ENCODE measurements at regions of chr11 and their contacts with region 1.

Region 1: DNA sequence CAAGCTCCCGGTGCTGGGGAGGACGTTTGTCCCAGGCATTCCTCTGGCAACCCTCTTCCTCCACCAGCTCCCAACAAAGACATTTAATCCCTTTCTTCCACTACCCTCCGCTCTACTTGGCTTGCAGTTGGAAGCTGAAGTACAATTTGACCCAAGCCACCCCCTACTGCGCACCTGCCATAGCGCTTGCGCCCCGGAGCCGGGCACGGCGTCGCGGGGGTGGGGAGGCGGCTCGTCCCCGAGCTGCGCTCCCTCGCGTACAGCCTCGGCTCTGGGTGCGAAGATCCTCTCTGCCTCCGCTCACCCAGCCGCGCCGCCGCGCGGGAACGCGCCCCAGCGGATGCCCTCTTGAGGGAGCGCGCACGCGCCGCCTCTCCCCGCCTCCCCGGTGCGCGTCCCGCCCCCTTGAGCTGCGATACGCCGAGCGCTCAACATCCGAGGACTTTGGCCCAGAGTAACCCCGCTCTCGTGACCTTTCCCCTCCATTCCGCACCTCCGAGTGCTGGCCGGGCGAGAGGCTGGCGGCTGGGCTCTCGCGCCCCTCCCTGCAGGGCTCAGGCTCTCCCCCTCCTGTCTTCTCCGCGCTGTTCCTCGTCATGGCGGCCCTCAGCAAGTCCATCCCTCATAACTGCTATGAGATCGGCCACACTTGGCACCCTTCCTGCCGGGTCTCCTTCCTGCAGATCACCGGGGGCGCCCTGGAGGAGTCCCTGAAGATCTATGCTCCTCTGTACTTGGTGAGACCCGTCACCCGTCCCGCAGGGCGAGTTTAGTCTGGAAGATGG is at the start of gene TMEM135:
- DNase-seq: peak; percentile 81 to 95 (median 90)
- ATAC-seq: peak; percentile 95
- H3K4me3 ChIP-seq: peak within 1 kb of the TSS; percentile 95
- H3K4me3 Mint-ChIP-seq: peak within 1 kb of the TSS; percentile 96
- H3K27ac ChIP-seq: peak within 1 kb of the TSS; percentile 39 to 73
- H3K27ac Mint-ChIP-seq: peak within 1 kb of the TSS; percentile 85
- H3K4me1 ChIP-seq: peaks cover 20% of the 10 kb centered on the region
- H3K4me1 Mint-ChIP-seq: peaks cover 57% of the 10 kb centered on the region
- H3K27me3 ChIP-seq: no peaks in the 10 kb centered on the region
- H3K27me3 Mint-ChIP-seq: no peaks in the 10 kb centered on the region
- CTCF ChIP-seq: no peak
- total RNA-seq, gene TMEM135: 14.1 to 15.6 TPM

Region 2: GRCh38 chr11:87081358-87081757 is 43.7 kb after region 1 on chr11:
- CTCF ChIA-PET with region 1: no interaction called
- POLR2A ChIA-PET with region 1: interaction called, 3 read pairs
- intact Hi-C with region 1: loop called in 1 of 2 experiments (anchors 10 kb)
- DNase-seq: peak in 3 of 14 experiments; percentile 26 to 50 (median 27)
- ATAC-seq: peak; percentile 49
- H3K4me3 ChIP-seq: peak overlapping the region; percentile 39
- H3K4me3 Mint-ChIP-seq: peak overlapping the region; percentile 89
- H3K27ac ChIP-seq: peak overlapping the region in 1 of 2 donors; percentile 2
- H3K27ac Mint-ChIP-seq: peak overlapping the region; percentile 81
- H3K4me1 ChIP-seq: no peaks in the 10 kb centered on the region
- H3K4me1 Mint-ChIP-seq: peaks cover 26% of the 10 kb centered on the region
- H3K27me3 ChIP-seq: no peaks in the 10 kb centered on the region
- H3K27me3 Mint-ChIP-seq: no peaks in the 10 kb centered on the region
- CTCF ChIP-seq: no peak

Region 3: DNA sequence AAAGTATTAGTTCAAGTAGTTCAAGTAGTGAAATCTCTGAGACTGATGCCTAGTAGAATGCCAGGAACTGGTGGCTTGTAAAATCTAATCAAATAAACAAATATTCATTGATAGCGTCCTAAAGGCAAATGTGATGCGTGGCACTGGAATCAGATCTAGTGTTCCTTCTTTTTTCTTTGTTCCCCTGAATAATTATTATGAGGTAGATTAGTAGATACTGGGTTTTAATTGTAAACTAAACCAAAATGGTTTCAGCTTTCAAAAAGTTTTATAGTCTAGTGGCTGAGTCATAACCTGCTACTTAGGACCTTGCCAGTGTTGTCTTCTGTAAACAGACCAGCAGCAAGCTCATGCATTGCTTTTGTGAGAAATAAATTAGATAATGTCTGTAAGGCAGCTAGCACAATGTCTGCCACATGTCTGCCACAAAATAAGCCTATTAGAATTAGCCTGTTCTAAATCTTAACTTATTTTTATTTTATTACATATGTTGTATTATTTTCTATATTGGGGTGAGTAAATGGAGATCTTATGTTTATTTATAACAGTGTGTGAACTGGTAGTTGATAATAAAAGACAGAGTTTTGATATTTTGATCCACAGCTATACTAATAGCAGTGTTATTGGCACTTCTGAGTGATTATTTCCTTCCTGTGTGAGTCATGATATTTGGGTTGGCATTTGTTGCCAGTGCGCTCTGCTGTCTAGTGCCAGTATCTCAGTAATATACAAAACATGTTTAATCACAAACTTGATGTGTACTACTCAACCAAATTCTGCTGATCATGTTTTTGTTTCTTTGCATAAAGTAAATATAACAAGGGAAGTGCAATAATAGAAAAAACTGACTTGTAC is 135.8 kb after region 1 on chr11:
- CTCF ChIA-PET with region 1: no interaction called
- POLR2A ChIA-PET with region 1: no interaction called
- intact Hi-C with region 1: no loop called
- DNase-seq: peak in 2 of 14 experiments; percentile 4 to 5
- ATAC-seq: no peak
- H3K4me3 ChIP-seq: no peak overlapping the region
- H3K4me3 Mint-ChIP-seq: no peak overlapping the region
- H3K27ac ChIP-seq: no peak overlapping the region
- H3K27ac Mint-ChIP-seq: no peak overlapping the region
- H3K4me1 ChIP-seq: no peaks in the 10 kb centered on the region
- H3K4me1 Mint-ChIP-seq: peaks cover 4% of the 10 kb centered on the region
- H3K27me3 ChIP-seq: no peaks in the 10 kb centered on the region
- H3K27me3 Mint-ChIP-seq: no peaks in the 10 kb centered on the region
- CTCF ChIP-seq: no peak